GM10248 (cell line): ENCODE measurements at regions of chr14 and their contacts with region 1.

Region 1: DNA sequence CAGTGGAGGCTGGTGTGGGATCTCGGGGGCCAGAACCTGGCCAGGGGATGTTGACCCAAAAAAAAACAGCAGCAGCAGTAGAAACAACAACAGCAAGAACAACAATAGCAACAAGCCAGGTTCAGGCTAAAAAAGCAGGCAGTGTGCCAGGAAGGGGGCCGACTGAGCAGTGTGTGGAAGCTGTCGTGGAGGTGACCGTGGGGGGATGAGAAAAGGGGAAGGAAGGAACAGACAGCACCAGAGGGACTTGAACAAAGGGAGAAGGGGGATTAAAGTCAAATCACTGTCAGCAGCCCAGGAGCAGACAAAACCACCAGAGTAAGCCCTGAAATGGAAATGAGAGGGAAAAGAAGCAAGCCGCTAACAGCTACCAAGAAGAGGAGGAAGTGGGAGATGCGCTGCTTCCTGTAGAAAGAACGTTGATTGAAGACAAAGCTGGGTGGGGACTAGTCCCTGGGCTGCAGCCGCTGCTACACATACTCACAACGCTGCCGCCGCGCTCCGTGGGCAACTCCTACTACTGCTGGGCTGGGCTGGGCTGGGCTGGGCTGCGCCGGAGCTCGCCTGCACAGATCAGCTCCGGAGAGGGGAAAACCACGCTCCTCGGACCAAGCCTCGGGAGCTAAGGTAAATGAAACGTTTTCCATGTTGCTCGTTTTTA is at the start of gene GNG2:
- DNase-seq: peak; percentile 77
- CTCF ChIP-seq: no peak

Region 2: GRCh38 chr14:51846631-51847488 is 13.4 kb before region 1 on chr14:
- CTCF ChIA-PET with region 1: interaction called, 14 read pairs
- POLR2A ChIA-PET with region 1: interaction called, 14 read pairs
- DNase-seq: peak; percentile 81
- CTCF ChIP-seq: no peak